ENCODE measurements at regions of chr14 and their contacts with region 1.

Region 1: GRCh38 chr14:74860906-74861733 is 14.8 kb downstream of the PROX2 start:
- DNase-seq: peak; percentile 69 to 79 (median 78)
- H3K4me3 ChIP-seq: no peak overlapping the region
- H3K4me3 Mint-ChIP-seq: no peak overlapping the region
- H3K27ac ChIP-seq: no peak overlapping the region
- H3K27ac Mint-ChIP-seq: no peak overlapping the region
- H3K4me1 ChIP-seq: peaks cover 13 to 14% of the 10 kb centered on the region in 2 donors
- H3K4me1 Mint-ChIP-seq: peaks cover 21% of the 10 kb centered on the region
- H3K27me3 ChIP-seq: no peaks in the 10 kb centered on the region
- H3K27me3 Mint-ChIP-seq: peaks cover 0 to 2% (median 0%) of the 10 kb centered on the region in 3 donors
- CTCF ChIP-seq: peak; percentile 85

Region 2: DNA sequence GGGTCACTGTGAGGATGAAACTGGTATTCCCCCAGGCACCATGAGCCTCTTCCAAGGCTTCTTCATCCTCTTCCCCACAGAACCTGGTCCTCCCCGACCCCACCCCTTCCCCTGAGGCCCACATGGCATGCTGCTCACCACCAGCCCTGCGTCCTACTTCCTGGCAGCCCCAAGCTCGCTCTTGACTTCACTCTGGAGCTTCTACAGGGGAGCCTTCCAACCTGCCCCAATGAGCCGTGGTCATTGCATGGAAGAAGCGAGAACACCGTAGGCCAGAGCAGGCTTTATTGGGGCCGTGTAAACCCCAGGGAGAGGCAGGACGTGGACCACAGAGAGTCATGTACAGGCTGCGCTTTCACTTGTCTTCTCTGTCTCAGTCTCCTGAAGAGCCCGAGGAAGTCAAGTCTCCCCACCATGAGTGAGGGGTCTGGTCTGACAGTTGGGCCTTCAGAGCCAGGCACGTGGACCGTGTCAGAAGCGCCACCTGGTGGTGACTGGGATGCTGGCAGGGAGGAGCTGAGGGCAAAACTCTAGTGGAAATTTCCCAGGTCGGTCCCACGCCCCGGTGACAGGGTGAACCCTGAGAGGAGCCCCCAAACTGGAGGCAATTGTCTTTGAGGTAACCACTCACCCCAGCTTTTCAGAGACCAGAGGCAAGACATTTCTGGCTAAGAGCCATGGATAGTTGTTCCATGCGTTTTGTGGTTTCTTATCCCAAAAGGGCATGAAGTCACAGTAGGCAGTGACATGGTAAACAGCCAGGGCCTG is 44.4 kb after region 1 on chr14:
- intact Hi-C with region 1: loop called (anchors 2 kb)
- DNase-seq: peak; percentile 49 to 67 (median 56)
- H3K4me3 ChIP-seq: no peak overlapping the region
- H3K4me3 Mint-ChIP-seq: no peak overlapping the region
- H3K27ac ChIP-seq: peak overlapping the region in 1 of 2 donors; percentile 15
- H3K27ac Mint-ChIP-seq: peak overlapping the region in 3 of 7 donors; percentile 25 to 83 (median 43)
- H3K4me1 ChIP-seq: no peaks in the 10 kb centered on the region
- H3K4me1 Mint-ChIP-seq: no peaks in the 10 kb centered on the region
- H3K27me3 ChIP-seq: no peaks in the 10 kb centered on the region
- H3K27me3 Mint-ChIP-seq: peaks cover 0 to 6% (median 1%) of the 10 kb centered on the region in 3 donors
- CTCF ChIP-seq: peak; percentile 92

Region 3: GRCh38 chr14:75198291-75198933 is 337.3 kb after region 1 on chr14:
- intact Hi-C with region 1: no loop called
- DNase-seq: no peak
- H3K4me3 ChIP-seq: no peak overlapping the region
- H3K4me3 Mint-ChIP-seq: no peak overlapping the region
- H3K27ac ChIP-seq: no peak overlapping the region
- H3K27ac Mint-ChIP-seq: peak overlapping the region in 4 of 7 donors; percentile 54 to 71 (median 58)
- H3K4me1 ChIP-seq: peaks cover 26 to 36% of the 10 kb centered on the region in 2 donors
- H3K4me1 Mint-ChIP-seq: peaks cover 38% of the 10 kb centered on the region
- H3K27me3 ChIP-seq: no peaks in the 10 kb centered on the region
- H3K27me3 Mint-ChIP-seq: peaks cover 0 to 5% (median 1%) of the 10 kb centered on the region in 3 donors
- CTCF ChIP-seq: no peak